WTC11 (cell line): ENCODE measurements at regions of chr11 and their contacts with region 1.

Region 1: GRCh38 chr11:9137293-9138132 is 46.1 kb upstream of the SCUBE2 start:
- DNase-seq: peak; percentile 94
- ATAC-seq: peak; percentile 99
- H3K4me3 Mint-ChIP-seq: no peak overlapping the region
- H3K27ac Mint-ChIP-seq: peak overlapping the region; percentile 73
- H3K4me1 Mint-ChIP-seq: peaks cover 14% of the 10 kb centered on the region
- H3K27me3 Mint-ChIP-seq: no peaks in the 10 kb centered on the region
- CTCF ChIP-seq: peak; percentile 84

Region 2: GRCh38 chr11:8934749-8935478 is 202.6 kb before region 1 on chr11:
- CTCF ChIA-PET with region 1: interaction called, 20 read pairs
- POLR2A ChIA-PET with region 1: interaction called, 3 read pairs
- DNase-seq: no peak
- ATAC-seq: no peak
- H3K4me3 Mint-ChIP-seq: no peak overlapping the region
- H3K27ac Mint-ChIP-seq: no peak overlapping the region
- H3K4me1 Mint-ChIP-seq: peaks cover 25% of the 10 kb centered on the region
- H3K27me3 Mint-ChIP-seq: no peaks in the 10 kb centered on the region
- CTCF ChIP-seq: no peak

Region 3: DNA sequence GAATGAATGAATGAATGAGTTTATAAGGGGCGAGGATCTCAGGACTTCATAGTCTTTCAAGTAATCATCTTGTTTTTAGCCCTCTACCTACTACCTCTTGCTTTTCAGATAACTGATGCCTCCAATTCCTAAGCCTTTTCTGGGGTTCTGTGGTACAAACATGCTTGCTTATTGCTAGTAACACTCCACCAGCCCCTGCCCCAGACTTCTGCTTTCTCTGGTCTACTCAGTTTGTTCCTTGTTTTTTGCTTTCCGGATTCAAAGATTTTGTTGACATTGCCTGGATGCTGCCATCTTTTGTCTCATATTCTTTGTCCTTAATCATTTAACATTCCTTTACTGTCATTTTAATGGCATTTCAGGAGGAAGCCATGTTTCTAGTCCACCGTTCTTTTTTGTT is 164.4 kb before region 1 on chr11:
- CTCF ChIA-PET with region 1: no interaction called
- POLR2A ChIA-PET with region 1: no interaction called
- DNase-seq: no peak
- ATAC-seq: no peak
- H3K4me3 Mint-ChIP-seq: no peak overlapping the region
- H3K27ac Mint-ChIP-seq: no peak overlapping the region
- H3K4me1 Mint-ChIP-seq: no peaks in the 10 kb centered on the region
- H3K27me3 Mint-ChIP-seq: no peaks in the 10 kb centered on the region
- CTCF ChIP-seq: no peak

Region 4: DNA sequence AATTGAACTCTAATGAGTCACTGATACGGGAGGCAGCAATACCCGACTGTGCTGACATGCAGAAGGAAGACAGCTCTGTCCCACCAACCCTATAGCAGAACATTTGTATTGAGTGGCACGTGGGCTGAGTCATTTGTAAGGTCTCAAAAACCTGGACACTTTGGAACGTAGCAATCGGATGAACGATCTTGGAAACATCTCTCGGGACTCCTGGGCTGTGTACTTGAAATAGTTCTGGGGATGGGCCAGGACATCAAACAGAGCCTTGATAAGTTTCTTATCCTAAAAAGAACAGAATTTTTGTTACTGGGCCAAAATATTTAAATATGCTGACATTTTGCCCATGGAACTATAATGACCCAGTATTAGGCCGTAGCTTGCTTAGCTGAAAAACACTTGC is 116.6 kb before region 1 on chr11:
- CTCF ChIA-PET with region 1: interaction called, 88 read pairs
- POLR2A ChIA-PET with region 1: no interaction called
- DNase-seq: no peak
- ATAC-seq: no peak
- H3K4me3 Mint-ChIP-seq: no peak overlapping the region
- H3K27ac Mint-ChIP-seq: no peak overlapping the region
- H3K4me1 Mint-ChIP-seq: peaks cover 8% of the 10 kb centered on the region
- H3K27me3 Mint-ChIP-seq: no peaks in the 10 kb centered on the region
- CTCF ChIP-seq: no peak

Region 5: GRCh38 chr11:9070749-9071476 is 66.6 kb before region 1 on chr11:
- CTCF ChIA-PET with region 1: interaction called, 11 read pairs
- POLR2A ChIA-PET with region 1: no interaction called
- DNase-seq: no peak
- ATAC-seq: no peak
- H3K4me3 Mint-ChIP-seq: no peak overlapping the region
- H3K27ac Mint-ChIP-seq: no peak overlapping the region
- H3K4me1 Mint-ChIP-seq: peaks cover 22% of the 10 kb centered on the region
- H3K27me3 Mint-ChIP-seq: no peaks in the 10 kb centered on the region; the same call in 1 of the 2 replicates
- CTCF ChIP-seq: no peak

Region 6: GRCh38 chr11:9109939-9110731 is 27.4 kb before region 1 on chr11:
- CTCF ChIA-PET with region 1: interaction called, 10 read pairs
- POLR2A ChIA-PET with region 1: no interaction called
- DNase-seq: no peak
- ATAC-seq: no peak
- H3K4me3 Mint-ChIP-seq: no peak overlapping the region
- H3K27ac Mint-ChIP-seq: no peak overlapping the region
- H3K4me1 Mint-ChIP-seq: no peaks in the 10 kb centered on the region
- H3K27me3 Mint-ChIP-seq: peaks cover 4% of the 10 kb centered on the region
- CTCF ChIP-seq: no peak

Region 7: DNA sequence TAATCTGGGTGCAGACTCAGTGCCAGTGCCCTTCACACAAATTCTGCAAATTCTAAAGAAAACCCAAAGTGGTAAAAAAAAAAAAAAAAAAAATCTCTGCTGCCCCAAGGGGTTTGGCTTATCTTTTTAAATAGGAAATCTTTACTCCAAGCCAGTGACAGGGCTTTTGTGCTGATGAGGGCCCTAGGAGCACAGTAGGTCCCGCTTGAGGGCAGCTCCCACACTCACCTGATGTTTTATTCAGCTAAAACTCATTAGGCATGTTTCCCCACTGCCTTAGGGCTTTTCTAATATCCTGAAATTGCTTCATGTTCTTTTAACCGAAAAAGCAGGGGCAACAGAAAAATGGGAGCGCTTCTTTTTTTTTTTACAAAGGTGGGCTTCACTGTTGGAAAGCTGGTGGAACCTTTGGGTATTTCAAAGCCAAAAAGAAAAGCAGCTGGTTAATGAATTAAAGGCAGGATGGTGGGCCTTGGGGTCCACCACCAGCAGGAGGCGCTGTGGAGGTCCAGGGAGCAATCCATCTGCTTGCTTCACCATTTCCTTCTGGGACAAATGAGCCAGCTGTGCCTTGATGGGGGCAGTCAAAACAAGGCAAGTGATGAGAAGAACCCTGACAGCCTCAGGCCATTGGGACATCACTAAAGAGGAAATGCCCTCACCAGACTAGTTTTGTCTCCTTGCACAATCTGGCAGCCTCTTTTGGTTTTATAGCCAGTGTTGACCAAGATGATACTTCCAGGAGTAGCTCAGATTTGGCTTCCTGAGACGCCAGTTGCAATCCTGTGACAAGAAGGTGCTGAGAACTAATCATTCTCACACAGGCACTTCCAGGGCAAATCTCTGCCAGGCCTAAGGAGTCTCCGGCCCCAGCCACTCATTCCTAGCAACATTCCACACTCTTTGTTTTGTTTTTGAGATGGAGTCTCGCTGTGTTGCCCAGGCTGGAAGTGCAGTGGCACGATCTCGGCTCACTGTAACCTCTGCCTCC is 397.6 kb after region 1 on chr11:
- CTCF ChIA-PET with region 1: interaction called, 14 read pairs
- POLR2A ChIA-PET with region 1: no interaction called
- DNase-seq: peak; percentile 89
- ATAC-seq: peak; percentile 66
- H3K4me3 Mint-ChIP-seq: no peak overlapping the region
- H3K27ac Mint-ChIP-seq: peak overlapping the region; percentile 84; the same call in 1 of the 2 replicates
- H3K4me1 Mint-ChIP-seq: peaks cover 37% of the 10 kb centered on the region
- H3K27me3 Mint-ChIP-seq: no peaks in the 10 kb centered on the region
- CTCF ChIP-seq: peak; percentile 93